Calu3 (cell line): ENCODE measurements at regions of chr5 and their contacts with region 1.

Region 1: DNA sequence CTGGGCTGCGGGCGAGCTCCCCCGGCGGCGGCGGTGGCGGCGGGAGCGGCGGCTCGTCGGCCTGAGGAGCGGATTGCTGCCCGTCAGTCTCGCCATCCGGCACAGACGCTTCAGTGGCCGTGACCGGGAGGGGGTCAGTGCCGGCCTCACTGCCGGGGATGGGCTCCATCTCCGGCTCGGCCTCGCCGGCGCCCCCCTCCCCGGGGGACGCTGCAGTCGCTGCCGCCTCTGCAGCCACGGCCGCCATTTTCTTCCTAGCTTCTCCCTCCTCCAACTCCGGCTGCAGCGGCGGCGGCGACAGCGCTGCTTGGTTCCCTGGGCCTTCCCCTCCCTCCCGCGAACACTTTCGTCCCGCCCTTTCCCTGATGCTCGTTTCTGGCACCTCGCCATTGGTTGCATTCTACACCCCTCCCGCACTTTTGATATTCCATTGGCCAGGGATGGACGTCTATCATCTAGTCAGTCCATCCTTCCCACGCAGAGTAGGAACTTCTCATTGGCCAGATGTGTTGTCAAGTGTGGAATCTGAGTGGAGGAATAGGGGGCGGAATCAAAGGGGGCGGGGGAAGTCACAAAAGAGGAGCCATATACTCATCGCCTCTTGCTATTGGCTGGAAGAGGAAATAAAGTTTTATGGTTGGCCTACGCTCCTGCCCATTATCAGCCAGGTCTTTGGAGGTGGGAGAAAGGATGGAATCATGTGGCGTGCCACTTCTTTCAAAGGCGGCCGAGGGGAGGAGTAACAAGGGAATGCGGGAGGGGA is at the start of gene PWWP2A:
- DNase-seq: peak; percentile 99
- H3K4me3 Mint-ChIP-seq: peak within 1 kb of the TSS; percentile 77
- H3K27ac Mint-ChIP-seq: peak within 1 kb of the TSS; percentile 90
- H3K4me1 Mint-ChIP-seq: peaks cover 9% of the 10 kb centered on the region
- H3K27me3 Mint-ChIP-seq: no peaks in the 10 kb centered on the region
- CTCF ChIP-seq: no peak
- total RNA-seq, gene PWWP2A: 33.4 and 36.4 TPM in 2 replicates

Region 2: DNA sequence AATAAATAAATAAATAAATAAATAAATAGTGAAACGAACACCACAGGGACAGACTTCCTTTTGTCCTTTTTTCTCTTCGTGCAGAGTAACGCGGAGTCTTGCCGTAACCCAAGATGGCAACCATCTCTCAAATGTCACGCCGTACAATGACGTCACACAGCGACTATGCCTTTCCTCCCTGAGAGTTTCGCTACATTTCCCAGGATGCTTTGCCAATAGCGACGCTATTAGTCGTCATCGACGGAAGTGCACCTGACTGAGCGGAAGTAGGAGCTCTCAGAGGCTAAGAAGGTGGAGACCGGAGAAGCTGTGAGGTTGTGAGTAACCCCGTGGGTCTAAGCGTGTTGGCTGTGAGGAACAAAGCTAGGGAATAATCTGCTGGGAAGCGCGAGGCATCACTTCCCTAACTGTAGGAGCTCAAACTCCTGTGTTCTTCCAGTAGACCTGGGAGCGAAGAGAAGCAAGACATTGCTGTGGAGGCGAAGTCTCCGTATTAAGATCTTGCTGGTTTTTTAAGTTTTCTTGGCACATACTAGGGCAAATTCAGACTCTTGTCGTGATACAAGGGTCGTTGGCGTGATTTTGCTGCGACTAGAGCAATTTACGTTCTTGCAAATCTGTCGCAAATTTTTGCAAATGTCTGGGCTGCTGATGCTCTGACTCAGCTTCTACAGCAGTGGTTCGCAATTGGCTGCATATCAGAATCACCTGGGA is 110.3 kb before region 1 on chr5 and contains the start of gene TTC1:
- CTCF ChIA-PET with region 1: no interaction called
- intact Hi-C with region 1: no loop called
- DNase-seq: peak; percentile 93
- H3K4me3 Mint-ChIP-seq: peak within 1 kb of the TSS; percentile 93
- H3K27ac Mint-ChIP-seq: peak within 1 kb of the TSS; percentile 100
- H3K4me1 Mint-ChIP-seq: peaks cover 22% of the 10 kb centered on the region
- H3K27me3 Mint-ChIP-seq: no peaks in the 10 kb centered on the region
- CTCF ChIP-seq: no peak
- total RNA-seq, gene TTC1: 66.4 and 70.6 TPM in 2 replicates

Region 3: GRCh38 chr5:160165137-160166068 is 46.1 kb after region 1 on chr5:
- CTCF ChIA-PET with region 1: interaction called, 4 read pairs
- intact Hi-C with region 1: loop called (anchors 1 kb)
- DNase-seq: peak; percentile 96
- H3K4me3 Mint-ChIP-seq: peak overlapping the region; percentile 60
- H3K27ac Mint-ChIP-seq: peak overlapping the region; percentile 92
- H3K4me1 Mint-ChIP-seq: peaks cover 39% of the 10 kb centered on the region
- H3K27me3 Mint-ChIP-seq: no peaks in the 10 kb centered on the region
- CTCF ChIP-seq: no peak